RWPE1 (cell line): ENCODE measurements at regions of chr4 and their contacts with region 1.

Region 1: DNA sequence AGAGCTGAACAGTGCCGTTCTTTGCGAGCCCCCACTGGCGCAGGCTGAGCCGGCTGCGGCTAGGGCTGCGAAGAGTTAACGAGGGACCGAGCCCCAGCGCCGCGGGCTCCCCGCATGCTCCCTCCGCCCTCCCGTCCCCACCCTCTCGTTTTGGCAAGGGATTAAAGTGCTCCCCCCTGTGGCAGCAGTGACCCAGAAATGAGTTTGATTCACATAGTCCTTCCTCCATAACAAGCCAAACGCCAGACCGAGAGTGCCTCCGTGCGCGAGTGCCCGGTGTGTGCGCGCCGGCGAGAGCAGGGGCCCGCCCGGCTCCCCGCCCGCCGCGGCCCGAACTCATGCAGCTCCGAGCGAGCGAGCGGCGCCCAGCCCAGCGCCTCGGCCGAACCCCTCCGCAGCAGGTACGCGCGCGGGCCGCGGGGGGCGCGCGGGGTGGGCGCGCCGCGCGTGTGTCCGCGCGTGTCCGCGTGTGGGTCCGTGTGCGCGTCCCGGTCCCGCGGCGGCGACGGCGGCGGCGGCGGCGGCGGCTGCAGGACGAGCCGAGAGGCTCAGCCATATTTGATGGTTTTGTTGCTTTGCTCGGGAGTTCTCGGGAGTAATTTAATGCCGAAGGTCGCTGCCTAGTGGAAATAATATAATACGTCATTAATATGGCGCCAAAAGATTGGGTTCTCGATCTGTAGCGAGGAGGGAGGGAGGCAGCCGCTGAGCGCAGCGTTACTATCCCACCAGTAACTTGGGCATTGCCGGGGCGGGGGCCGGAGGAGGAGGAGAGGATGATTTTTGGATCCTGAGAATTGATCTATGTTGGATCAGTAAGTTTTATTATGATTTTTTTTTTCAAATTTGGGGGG is at the start of gene JADE1:
- DNase-seq: peak; percentile 91
- H3K27ac ChIP-seq: peak within 1 kb of the TSS; percentile 99
- CTCF ChIP-seq: peak; percentile 77

Region 2: DNA sequence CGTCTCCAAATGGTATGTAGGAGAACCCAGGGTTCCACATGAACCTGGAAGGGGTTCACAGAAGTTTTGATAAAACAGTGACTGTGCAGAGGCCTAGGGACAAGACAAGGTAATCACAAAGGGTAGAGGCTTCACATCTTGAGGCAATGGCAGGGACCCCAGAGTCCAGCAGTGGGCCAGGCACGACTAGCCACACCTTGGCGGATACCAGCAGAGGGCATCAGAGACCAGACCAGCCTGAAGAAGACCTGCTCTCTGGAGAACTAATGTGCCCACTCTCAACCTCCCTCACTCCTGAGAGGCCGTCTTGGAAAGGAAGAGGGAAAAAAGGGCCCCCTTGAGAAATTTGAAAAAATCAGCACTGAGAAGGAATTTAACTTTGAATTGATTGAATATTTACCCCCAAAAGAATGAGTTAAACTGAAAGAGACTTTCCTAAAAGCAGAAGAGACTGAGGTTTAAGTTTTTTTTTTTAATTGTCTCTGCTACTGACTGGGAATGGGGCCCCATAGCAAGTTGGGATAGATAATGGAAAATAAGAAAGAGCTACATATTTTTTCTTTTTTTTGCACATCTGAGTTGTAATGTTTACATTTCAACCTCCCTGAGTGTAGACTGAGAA is 244.0 kb before region 1 on chr4:
- CTCF ChIA-PET with region 1: no interaction called
- POLR2A ChIA-PET with region 1: interaction called, 11 read pairs
- DNase-seq: peak; percentile 65
- H3K27ac ChIP-seq: no peak overlapping the region
- CTCF ChIP-seq: peak; percentile 58

Region 3: GRCh38 chr4:128675083-128675482 is 134.6 kb before region 1 on chr4:
- CTCF ChIA-PET with region 1: no interaction called
- POLR2A ChIA-PET with region 1: no interaction called
- DNase-seq: no peak
- H3K27ac ChIP-seq: no peak overlapping the region
- CTCF ChIP-seq: no peak

Region 4: DNA sequence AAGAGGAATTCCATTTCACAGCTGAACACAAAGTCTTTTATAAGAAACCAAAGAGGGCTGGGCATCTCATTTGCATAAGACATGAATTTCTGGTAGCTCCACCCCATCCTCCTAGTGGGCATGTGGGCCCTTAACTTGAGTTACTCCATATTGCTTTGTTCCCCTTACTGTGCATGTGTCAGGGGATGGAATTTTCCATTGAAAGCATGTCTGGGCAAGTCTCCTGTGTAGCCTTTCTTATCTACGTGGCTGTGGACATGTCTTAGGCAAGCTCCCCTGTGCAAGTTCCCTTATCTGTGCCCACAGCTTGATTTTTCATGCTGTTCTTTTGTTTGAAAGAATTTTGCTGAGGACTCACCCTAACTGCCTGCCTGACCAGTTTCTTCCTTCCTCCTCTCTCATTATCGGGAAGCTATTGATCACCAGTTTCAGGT is 123.7 kb before region 1 on chr4:
- CTCF ChIA-PET with region 1: no interaction called
- POLR2A ChIA-PET with region 1: no interaction called
- DNase-seq: no peak
- H3K27ac ChIP-seq: peak overlapping the region; percentile 40
- CTCF ChIP-seq: no peak

Region 5: GRCh38 chr4:128942607-128943006 is 132.9 kb after region 1 on chr4:
- CTCF ChIA-PET with region 1: no interaction called
- POLR2A ChIA-PET with region 1: no interaction called
- DNase-seq: no peak
- H3K27ac ChIP-seq: no peak overlapping the region
- CTCF ChIP-seq: no peak